Esophagus muscularis mucosa (tissue), 4 donors: ENCODE measurements at regions of chr9 and their contacts with region 1.

Region 1: DNA sequence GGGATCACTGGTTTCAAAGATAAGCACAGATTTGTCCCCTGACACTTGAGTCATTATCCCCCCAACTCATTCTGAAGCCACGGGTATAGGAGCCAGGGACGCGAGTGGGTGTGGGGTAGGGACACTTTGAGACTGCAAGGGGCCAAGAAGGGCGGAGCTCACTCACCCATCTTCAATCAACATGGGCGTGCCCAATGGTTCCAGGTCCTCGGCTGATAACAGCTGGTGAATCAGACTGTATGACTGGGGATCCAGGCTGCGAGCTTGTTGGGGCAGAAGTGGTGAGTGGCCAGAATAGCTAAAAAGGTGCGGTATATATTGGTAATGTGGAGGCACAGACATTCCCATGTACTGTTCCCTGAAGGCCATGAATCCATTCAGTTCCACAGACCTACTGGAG is 30.7 kb upstream of the NR5A1 start:
- DNase-seq: no peak
- H3K4me3 ChIP-seq: no peak overlapping the region
- H3K27ac ChIP-seq: no peak overlapping the region
- H3K4me1 ChIP-seq: no peaks in the 10 kb centered on the region
- H3K27me3 ChIP-seq: no peaks in the 10 kb centered on the region
- CTCF ChIP-seq: no peak
- EP300 ChIP-seq: no peak
- POLR2A ChIP-seq: no peak

Region 2: GRCh38 chr9:124126571-124127289 is 411.2 kb before region 1 on chr9:
- intact Hi-C with region 1: loop called (anchors 5 kb)
- DNase-seq: no peak
- H3K4me3 ChIP-seq: no peak overlapping the region
- H3K27ac ChIP-seq: no peak overlapping the region
- H3K4me1 ChIP-seq: no peaks in the 10 kb centered on the region
- H3K27me3 ChIP-seq: peaks cover 0 to 28% (median 0%) of the 10 kb centered on the region in 4 donors
- CTCF ChIP-seq: peak in 2 of 3 experiments; percentile 91 to 99
- EP300 ChIP-seq: no peak
- POLR2A ChIP-seq: no peak

Region 3: DNA sequence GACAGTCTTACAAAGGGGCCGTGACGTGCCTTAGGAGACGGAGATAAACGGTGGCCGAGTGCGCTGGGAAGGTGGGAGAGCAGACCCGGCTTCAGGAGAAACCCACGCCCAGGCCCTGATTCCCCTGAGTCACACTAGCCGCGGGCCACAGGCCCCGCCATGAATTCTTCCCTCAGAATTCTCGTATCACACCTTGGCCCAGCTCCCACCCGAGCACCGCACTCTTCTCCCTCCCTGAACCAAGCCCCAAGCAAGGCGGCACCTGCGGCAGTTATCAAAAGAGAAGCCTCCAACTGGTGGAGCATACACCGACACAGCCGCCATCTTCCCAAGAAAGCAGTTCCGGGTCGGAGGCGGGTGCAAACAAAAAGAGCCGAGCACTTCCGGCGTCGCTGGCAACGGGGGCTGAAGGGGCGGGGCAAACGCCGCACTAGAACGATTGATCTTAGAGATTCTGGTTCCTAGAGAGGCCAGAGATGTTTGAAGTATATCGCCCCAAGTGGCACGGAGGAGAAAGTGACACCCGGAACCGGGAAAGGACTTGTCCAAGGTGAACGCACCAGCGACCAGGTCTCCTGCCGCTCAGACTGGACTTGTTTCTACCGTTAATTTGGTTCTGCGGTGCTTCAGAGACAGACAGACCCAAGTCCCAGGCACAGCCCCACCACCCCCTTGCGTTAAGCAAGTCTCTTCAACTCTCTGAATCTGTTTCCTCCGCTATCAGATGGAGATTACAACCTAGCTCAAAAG is 122.6 kb before region 1 on chr9 and contains the start of gene PSMB7:
- intact Hi-C with region 1: loop called (anchors 2 kb)
- DNase-seq: peak; percentile 99
- H3K4me3 ChIP-seq: peak within 1 kb of the TSS; percentile 78 to 89 (median 86)
- H3K27ac ChIP-seq: peak within 1 kb of the TSS; percentile 42 to 76 (median 69)
- H3K4me1 ChIP-seq: peaks cover 10 to 31% (median 23%) of the 10 kb centered on the region in 4 donors
- H3K27me3 ChIP-seq: no peaks in the 10 kb centered on the region
- CTCF ChIP-seq: peak; percentile 93
- EP300 ChIP-seq: no peak
- POLR2A ChIP-seq: peak; percentile 60
- total RNA-seq, gene PSMB7: 105 to 124 (median 113) TPM

Region 4: GRCh38 chr9:124880501-124880900 is 342.6 kb after region 1 on chr9:
- intact Hi-C with region 1: no loop called
- DNase-seq: no peak
- H3K4me3 ChIP-seq: no peak overlapping the region
- H3K27ac ChIP-seq: no peak overlapping the region
- H3K4me1 ChIP-seq: peaks cover 0 to 7% (median 0%) of the 10 kb centered on the region in 4 donors
- H3K27me3 ChIP-seq: no peaks in the 10 kb centered on the region
- CTCF ChIP-seq: no peak
- EP300 ChIP-seq: no peak
- POLR2A ChIP-seq: no peak